ENCODE measurements at regions of chr2 and their contacts with region 1.

Region 1: GRCh38 chr2:114550895-114551793 is 108.7 kb downstream of the DPP10 start:
- DNase-seq: peak; percentile 45 to 70 (median 63)
- H3K4me3 ChIP-seq: no peak overlapping the region
- H3K27ac ChIP-seq: no peak overlapping the region
- H3K4me1 ChIP-seq: peaks cover 0 to 3% (median 0%) of the 10 kb centered on the region in 4 experiments
- H3K27me3 ChIP-seq: peaks cover 0 to 3% (median 0%) of the 10 kb centered on the region in 5 experiments

Region 2: DNA sequence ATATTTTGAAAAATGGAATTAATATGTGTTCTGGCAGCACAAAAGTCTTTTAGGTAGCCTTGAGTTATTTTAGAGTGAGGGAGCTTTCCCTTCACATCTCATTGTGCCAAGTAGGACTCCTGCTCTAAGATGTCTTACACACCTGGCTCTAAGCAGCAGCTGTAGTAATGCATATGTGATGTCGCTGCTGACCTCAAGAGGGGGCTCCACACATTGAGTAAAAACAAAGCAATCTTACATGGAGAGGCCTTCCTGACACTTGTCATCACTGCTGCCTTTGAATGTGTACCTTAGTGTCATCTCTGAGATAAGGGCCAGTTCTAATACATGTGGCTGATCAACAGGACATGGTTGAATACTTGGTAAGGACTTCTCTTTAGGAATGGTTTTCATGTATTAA is 585.5 kb before region 1 on chr2:
- CTCF ChIA-PET with region 1: interaction called, 19 read pairs
- POLR2A ChIA-PET with region 1: no interaction called
- DNase-seq: peak; percentile 43 to 75 (median 73)
- H3K4me3 ChIP-seq: no peak overlapping the region
- H3K27ac ChIP-seq: no peak overlapping the region
- H3K4me1 ChIP-seq: peaks cover 6 to 16% (median 12%) of the 10 kb centered on the region in 4 experiments
- H3K27me3 ChIP-seq: no peaks in the 10 kb centered on the region

Region 3: GRCh38 chr2:113977660-113978523 is 573.3 kb before region 1 on chr2:
- CTCF ChIA-PET with region 1: interaction called, 11 read pairs
- POLR2A ChIA-PET with region 1: no interaction called
- DNase-seq: peak in 2 of 3 donors; percentile 17 to 35
- H3K4me3 ChIP-seq: no peak overlapping the region
- H3K27ac ChIP-seq: no peak overlapping the region
- H3K4me1 ChIP-seq: peaks cover 0 to 17% (median 4%) of the 10 kb centered on the region in 4 experiments
- H3K27me3 ChIP-seq: no peaks in the 10 kb centered on the region

Region 4: DNA sequence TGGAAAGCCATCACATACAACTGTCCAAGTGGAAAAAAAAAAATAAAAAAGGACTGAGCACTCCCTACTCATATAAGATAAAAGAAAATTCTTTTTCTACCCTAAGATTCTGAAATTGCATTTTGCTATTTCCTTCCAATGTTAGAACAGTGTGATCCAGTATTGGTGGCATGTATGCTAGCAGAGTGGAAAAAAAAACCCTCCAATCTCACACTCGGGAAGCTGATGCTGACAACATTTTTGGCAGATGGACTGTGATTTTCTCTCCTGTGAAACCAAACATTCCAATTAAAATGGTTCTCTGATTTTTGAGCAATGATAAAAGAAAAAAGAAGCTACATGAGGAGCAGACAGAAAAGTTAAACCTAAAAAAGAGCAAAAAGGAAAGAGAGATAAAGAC is 311.1 kb after region 1 on chr2:
- CTCF ChIA-PET with region 1: no interaction called
- POLR2A ChIA-PET with region 1: no interaction called
- DNase-seq: no peak
- H3K4me3 ChIP-seq: no peak overlapping the region
- H3K27ac ChIP-seq: no peak overlapping the region
- H3K4me1 ChIP-seq: no peaks in the 10 kb centered on the region
- H3K27me3 ChIP-seq: no peaks in the 10 kb centered on the region